Breast epithelium (tissue), 4 donors: ENCODE measurements at regions of chr4 and their contacts with region 1.

Region 1: GRCh38 chr4:159910721-159911120 is 807.8 kb downstream of the RAPGEF2 start:
- DNase-seq: no peak
- H3K4me3 ChIP-seq: no peak overlapping the region
- H3K27ac ChIP-seq: no peak overlapping the region
- H3K4me1 ChIP-seq: no peaks in the 10 kb centered on the region
- H3K27me3 ChIP-seq: no peaks in the 10 kb centered on the region
- CTCF ChIP-seq: no peak
- POLR2A ChIP-seq: no peak

Region 2: DNA sequence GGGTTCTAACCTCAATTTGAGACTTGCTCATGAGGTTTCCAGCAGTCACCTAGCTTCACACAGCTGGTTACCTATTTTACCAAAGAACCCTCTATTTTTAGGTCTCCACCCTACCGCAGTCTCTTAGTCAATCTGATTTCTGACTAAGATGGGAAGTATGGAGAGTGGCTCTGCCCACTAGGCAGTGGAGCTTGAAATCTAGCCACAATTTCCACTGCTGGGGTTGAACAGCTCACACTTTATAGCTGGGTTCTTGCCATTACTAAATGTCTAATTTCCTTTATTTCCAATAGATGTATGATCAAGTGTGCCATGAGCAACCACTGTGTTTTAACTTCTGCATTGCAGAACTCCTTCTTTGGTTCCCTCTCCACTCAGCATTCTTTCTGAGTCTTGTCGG is 1781.0 kb before region 1 on chr4:
- intact Hi-C with region 1: no loop called
- DNase-seq: no peak
- H3K4me3 ChIP-seq: no peak overlapping the region
- H3K27ac ChIP-seq: peak overlapping the region in 1 of 2 donors; percentile 20
- H3K4me1 ChIP-seq: no peaks in the 10 kb centered on the region
- H3K27me3 ChIP-seq: no peaks in the 10 kb centered on the region
- CTCF ChIP-seq: no peak
- POLR2A ChIP-seq: no peak

Region 3: GRCh38 chr4:160563552-160564282 is 653.0 kb after region 1 on chr4:
- intact Hi-C with region 1: no loop called
- DNase-seq: no peak
- H3K4me3 ChIP-seq: no peak overlapping the region
- H3K27ac ChIP-seq: no peak overlapping the region
- H3K4me1 ChIP-seq: no peaks in the 10 kb centered on the region
- H3K27me3 ChIP-seq: no peaks in the 10 kb centered on the region
- CTCF ChIP-seq: no peak
- POLR2A ChIP-seq: no peak

Region 4: DNA sequence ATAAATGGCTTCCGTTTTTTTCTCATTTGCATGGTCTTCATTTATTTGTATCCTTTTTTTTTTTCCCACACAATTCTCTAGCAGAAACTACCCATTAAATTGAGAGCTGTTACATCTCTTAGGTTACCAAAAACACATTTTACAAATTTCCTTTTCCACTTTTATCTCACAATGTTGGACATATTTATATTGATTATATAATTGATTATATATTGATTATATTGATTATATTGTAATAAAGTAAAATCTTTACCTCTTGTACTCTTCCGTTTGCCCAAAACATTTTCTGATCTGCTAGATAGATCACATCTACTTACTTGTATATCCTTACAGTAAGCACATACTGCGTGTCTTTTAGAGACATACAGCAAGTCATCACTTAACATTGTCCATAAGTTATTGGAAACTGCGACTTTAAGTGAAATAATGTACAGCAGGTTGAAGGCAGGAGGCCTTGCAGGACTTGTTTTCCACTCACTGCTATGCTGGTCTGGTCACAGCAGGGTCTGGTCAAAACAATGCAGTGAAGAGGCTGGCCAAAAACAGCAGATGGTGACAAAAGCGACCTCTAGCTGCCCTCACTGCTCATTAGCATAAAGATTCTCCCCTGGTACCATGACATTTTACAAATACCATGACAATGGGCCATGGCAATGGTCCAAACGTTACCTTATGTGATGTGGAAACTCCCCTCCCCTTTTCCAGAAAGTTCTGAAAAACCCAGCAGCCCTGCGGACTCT is 969.3 kb after region 1 on chr4:
- intact Hi-C with region 1: loop called (anchors 5 kb)
- DNase-seq: no peak
- H3K4me3 ChIP-seq: no peak overlapping the region
- H3K27ac ChIP-seq: no peak overlapping the region
- H3K4me1 ChIP-seq: no peaks in the 10 kb centered on the region
- H3K27me3 ChIP-seq: no peaks in the 10 kb centered on the region
- CTCF ChIP-seq: no peak
- POLR2A ChIP-seq: no peak

Region 5: DNA sequence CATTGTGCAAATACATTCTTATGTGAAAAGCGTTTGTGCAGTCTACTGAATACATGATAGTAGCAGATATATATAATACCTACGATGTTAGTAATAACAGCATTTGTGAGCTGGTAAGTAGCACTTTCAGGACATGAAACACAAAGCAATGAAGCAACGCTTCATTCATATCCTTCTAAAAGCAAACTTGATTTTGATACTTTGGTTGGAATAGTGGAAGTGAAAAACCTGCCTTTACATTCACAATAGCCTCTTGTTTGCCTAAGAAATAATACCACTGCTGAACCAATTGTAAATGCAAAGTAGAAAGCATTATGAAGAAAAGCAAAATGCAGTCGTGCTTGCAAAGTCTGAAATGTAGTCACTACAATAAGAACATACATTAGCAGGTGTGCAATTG is 1326.8 kb after region 1 on chr4:
- intact Hi-C with region 1: loop called (anchors 10 kb)
- DNase-seq: no peak
- H3K4me3 ChIP-seq: no peak overlapping the region
- H3K27ac ChIP-seq: no peak overlapping the region
- H3K4me1 ChIP-seq: no peaks in the 10 kb centered on the region
- H3K27me3 ChIP-seq: no peaks in the 10 kb centered on the region
- CTCF ChIP-seq: no peak
- POLR2A ChIP-seq: no peak